ENCODE measurements at regions of chr17 and their contacts with region 1.

Region 1: GRCh38 chr17:50626037-50626574 is 8.6 kb upstream of the ABCC3 start:
- DNase-seq: peak; percentile 58

Region 2: GRCh38 chr17:50689956-50690886 is 64.1 kb after region 1 on chr17:
- in situ Hi-C with region 1: loop called (anchors 5 kb)
- DNase-seq: no peak

Measured in G401 (cell line).